Activated CD4-positive, alpha-beta memory T cell treated with anti-CD3 and anti-CD28 coated beads, Interleukin-2, amount 10 ng/mL, durations not matched to agents 7 days and 5 days (primary cell): ENCODE measurements at regions of chr15 and their contacts with region 1.

Region 1: DNA sequence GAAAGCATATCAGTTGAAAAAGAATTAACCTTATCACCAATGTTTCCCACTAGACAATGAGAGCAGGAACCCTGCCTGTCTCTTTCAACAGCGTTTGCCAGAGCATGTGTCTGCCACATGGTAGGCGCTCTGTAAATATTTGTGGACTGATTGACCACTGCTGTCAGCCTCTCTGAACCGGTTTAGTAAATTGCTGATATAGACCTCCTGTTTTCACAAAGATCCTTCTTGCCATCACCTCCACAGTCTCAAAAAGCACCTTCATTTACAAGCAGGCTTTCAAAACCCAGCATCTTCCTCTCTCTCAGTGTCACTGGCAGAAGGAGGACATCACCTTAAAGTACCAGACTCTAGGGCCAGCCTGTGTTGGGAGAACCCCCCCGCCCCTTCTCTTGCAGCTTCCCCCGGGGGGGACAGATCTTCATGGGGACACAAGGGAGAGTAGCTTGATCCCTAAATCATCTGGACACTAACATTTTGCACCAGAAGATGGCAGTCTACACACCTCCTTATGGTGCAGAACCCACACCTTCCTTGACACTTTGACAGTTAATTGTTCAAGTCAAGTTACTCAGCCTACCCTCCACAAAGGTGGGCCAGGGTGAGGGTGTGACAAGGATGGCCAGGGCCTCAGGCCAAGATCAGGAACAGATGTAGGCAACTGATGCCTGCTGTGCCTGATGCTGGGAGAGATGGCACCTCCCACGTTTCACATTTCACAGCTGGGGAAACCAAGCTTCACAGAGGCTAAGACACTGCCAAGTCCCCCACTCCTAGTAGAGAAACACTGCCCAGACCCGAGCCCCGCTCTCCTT is 37.8 kb upstream of the USP3 start:
- DNase-seq: peak; percentile 58
- H3K4me3 Mint-ChIP-seq: no peak overlapping the region
- H3K27ac Mint-ChIP-seq: peak overlapping the region; percentile 27
- H3K4me1 Mint-ChIP-seq: peaks cover 11% of the 10 kb centered on the region
- H3K27me3 Mint-ChIP-seq: peaks cover 6% of the 10 kb centered on the region

Region 2: DNA sequence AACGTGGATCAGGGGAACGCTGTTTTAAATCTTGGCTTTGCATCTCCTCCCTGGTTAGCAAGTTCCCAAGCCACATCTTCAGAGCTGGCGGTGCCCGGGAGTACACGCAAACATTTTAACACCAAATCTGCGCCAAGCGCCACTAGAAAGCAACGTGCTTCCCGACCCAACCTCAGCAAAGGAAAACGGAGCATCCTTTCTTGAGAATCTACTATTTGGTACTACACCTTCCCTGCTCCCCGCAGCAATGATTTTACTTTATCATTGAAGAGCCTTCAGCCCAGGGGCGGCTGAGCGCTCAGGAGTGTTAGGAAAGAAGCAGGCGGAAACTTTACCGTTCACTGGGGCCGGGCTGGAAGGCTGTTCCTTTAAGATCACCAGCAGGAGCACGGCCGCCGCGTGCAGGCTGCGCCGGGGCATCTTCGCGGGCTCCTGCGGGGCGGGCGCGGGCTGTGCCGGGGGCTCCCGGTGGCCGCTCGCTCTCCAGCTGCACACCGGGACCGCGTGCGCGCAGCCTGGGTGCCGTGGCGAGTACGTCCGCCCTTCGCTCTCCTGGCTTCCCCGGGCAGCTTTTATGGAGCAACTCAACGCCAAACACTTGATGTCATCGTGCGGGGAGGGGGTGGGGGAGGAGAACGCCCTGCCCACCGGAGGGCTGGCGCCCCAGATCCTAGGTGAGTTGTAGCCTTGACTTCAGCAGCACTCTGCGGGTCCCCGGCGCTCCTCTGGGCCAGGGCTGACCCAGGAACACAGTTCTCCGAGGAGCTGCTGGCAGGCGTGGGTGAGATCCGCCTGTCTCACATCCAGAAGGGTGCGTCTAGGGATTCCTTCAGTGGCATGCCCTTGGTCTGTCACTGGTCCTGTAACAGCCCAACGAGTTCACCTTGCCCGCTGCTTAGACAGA is 85.0 kb before region 1 on chr15 and contains the start of gene CA12:
- CTCF ChIA-PET with region 1: no interaction called
- POLR2A ChIA-PET with region 1: no interaction called
- DNase-seq: no peak
- H3K4me3 Mint-ChIP-seq: peak within 1 kb of the TSS; percentile 61
- H3K27ac Mint-ChIP-seq: no peak within 1 kb of the TSS
- H3K4me1 Mint-ChIP-seq: peaks cover 19% of the 10 kb centered on the region
- H3K27me3 Mint-ChIP-seq: peaks cover 69% of the 10 kb centered on the region
- total RNA-seq, gene CA12: 0.20 TPM in 1 of 2 experiments, not detected in the other

Region 3: DNA sequence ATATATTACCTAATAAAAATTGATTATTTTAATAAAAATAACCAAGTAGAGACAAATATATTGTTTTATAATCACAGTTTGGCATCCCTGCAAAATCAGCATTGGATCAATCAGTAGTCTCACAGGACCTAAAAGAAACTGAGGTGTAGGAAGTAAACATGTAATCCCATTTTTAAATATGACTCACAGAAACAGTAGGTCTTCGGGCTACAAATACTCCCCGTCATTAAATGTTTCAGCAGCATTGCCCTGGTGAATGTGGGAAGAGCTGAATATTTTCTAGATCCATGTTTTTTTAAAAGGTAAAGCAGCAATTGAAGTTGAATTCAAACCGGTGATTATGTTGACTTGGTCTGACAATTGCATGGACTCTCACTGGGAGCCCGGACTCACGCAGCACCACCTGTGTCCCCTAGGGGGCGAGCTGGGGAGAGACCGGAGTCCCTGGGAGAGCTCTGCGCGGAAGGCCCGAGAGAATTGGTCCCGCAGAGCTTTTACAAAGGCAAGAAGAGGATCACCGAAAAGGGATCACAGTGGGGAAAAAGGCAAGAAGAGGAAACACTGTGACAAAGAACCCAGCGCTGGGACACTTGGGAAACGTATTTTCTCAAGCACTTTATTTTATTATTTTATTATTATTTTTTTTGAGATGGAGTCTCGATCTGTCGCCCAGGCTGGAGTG is 20.6 kb after region 1 on chr15:
- CTCF ChIA-PET with region 1: interaction called, 17 read pairs
- POLR2A ChIA-PET with region 1: interaction called, 7 read pairs
- DNase-seq: peak; percentile 90
- H3K4me3 Mint-ChIP-seq: peak overlapping the region; percentile 12
- H3K27ac Mint-ChIP-seq: peak overlapping the region; percentile 10
- H3K4me1 Mint-ChIP-seq: peaks cover 57% of the 10 kb centered on the region
- H3K27me3 Mint-ChIP-seq: peaks cover 2% of the 10 kb centered on the region

Region 4: GRCh38 chr15:63504247-63504978 is 37.8 kb after region 1 on chr15 and contains the start of gene USP3:
- CTCF ChIA-PET with region 1: interaction called, 50 read pairs
- POLR2A ChIA-PET with region 1: interaction called, 28 read pairs
- DNase-seq: peak; percentile 94
- H3K4me3 Mint-ChIP-seq: peak within 1 kb of the TSS; percentile 94
- H3K27ac Mint-ChIP-seq: peak within 1 kb of the TSS; percentile 95
- H3K4me1 Mint-ChIP-seq: peaks cover 82% of the 10 kb centered on the region
- H3K27me3 Mint-ChIP-seq: no peaks in the 10 kb centered on the region
- total RNA-seq, gene USP3: 67.9 to 68.7 TPM

Region 5: GRCh38 chr15:63544258-63545026 is 77.9 kb after region 1 on chr15:
- CTCF ChIA-PET with region 1: interaction called, 13 read pairs
- POLR2A ChIA-PET with region 1: no interaction called
- DNase-seq: no peak
- H3K4me3 Mint-ChIP-seq: no peak overlapping the region
- H3K27ac Mint-ChIP-seq: peak overlapping the region; percentile 48
- H3K4me1 Mint-ChIP-seq: peaks cover 12% of the 10 kb centered on the region
- H3K27me3 Mint-ChIP-seq: no peaks in the 10 kb centered on the region

Region 6: GRCh38 chr15:63600616-63601025 is 134.0 kb after region 1 on chr15:
- CTCF ChIA-PET with region 1: interaction called, 31 read pairs
- POLR2A ChIA-PET with region 1: interaction called, 10 read pairs
- DNase-seq: peak; percentile 91
- H3K4me3 Mint-ChIP-seq: peak overlapping the region; percentile 89
- H3K27ac Mint-ChIP-seq: peak overlapping the region; percentile 87
- H3K4me1 Mint-ChIP-seq: peaks cover 56% of the 10 kb centered on the region
- H3K27me3 Mint-ChIP-seq: no peaks in the 10 kb centered on the region

Region 7: DNA sequence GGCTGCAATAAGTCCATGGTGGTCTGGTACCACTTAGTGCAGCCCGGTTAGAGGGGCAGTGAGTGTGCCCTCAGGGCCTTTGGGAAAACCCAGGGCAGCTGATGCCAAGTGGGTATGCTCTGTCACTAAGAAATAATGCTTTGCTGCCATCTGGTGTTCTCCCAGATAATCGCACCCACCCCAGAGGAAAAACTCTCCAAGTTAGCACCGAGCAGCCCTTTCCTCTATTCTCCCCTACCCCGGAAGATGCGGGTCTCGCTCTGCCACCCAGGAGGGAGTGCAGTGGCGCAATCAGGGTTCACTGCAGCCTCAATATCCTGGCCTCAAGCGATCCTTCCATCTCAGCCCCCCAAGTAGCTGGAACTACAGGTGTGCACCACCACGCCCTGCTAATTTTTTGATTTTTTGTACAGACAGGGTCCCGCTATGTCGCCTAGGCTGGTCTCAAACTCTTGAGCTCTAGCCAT is 601.0 kb after region 1 on chr15:
- CTCF ChIA-PET with region 1: interaction called, 11 read pairs
- POLR2A ChIA-PET with region 1: interaction called, 3 read pairs
- DNase-seq: peak; percentile 70
- H3K4me3 Mint-ChIP-seq: no peak overlapping the region
- H3K27ac Mint-ChIP-seq: peak overlapping the region; percentile 49
- H3K4me1 Mint-ChIP-seq: peaks cover 16% of the 10 kb centered on the region
- H3K27me3 Mint-ChIP-seq: no peaks in the 10 kb centered on the region